Activated CD4-positive, alpha-beta T cell treated with anti-CD3 and anti-CD28 coated beads for 36 hours (primary cell): ENCODE measurements at regions of chr7 and their contacts with region 1.

Region 1: DNA sequence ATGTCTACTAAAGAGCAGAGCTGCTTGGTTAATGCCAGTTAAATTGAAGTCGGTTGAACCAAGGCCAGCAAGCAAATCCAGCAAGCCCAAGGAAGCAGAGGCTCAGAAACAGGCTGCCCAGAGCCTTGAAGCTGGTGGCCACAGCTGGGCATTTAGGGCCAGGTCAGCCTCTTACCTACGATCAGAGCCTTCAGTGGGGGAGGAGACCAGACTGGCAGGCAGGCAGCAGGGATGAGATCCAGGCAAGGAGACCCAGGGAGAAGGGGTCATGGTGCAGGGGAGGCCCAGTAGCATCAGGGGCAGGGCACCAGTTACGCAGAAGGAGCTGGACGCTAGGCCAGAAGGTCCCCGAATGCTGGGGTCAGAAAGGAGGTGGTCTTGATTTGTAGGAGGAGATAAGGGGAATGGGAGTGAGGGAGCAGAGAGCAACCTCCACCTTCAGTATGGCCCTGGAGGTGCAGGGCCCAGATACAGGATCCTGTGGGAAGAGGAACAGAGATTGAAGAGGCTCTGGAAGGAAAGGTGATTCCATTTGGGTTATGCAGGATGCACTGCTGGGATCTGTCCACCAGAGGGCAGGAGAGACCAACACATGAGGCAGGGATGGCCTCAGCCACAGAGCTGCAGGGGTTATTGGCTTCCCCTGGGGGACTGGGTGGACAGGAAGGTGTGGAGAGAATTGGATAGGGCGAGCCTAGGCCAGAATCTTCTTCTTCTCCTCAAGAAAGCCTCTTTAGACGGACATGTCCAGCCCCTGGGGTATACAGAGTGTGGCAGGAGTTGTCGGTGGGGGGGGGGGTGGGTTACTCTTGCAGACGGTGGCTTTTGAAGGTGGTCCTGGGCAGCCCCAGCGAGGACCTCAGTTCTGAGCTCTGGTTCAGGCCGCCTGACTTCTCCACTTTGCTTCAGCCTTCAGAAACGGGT is 132.6 kb upstream of the PODXL start:
- DNase-seq: peak; percentile 75
- ATAC-seq: peak; percentile 75
- H3K4me3 Mint-ChIP-seq: no peak overlapping the region
- H3K27ac Mint-ChIP-seq: no peak overlapping the region
- H3K4me1 Mint-ChIP-seq: no peaks in the 10 kb centered on the region
- H3K27me3 Mint-ChIP-seq: peaks cover 42% of the 10 kb centered on the region

Region 2: GRCh38 chr7:131699323-131699722 is 10.3 kb after region 1 on chr7:
- CTCF ChIA-PET with region 1: interaction called, 20 read pairs
- POLR2A ChIA-PET with region 1: no interaction called
- intact Hi-C with region 1: no loop called
- DNase-seq: no peak
- ATAC-seq: no peak
- H3K4me3 Mint-ChIP-seq: no peak overlapping the region
- H3K27ac Mint-ChIP-seq: no peak overlapping the region
- H3K4me1 Mint-ChIP-seq: no peaks in the 10 kb centered on the region
- H3K27me3 Mint-ChIP-seq: peaks cover 5% of the 10 kb centered on the region

Region 3: DNA sequence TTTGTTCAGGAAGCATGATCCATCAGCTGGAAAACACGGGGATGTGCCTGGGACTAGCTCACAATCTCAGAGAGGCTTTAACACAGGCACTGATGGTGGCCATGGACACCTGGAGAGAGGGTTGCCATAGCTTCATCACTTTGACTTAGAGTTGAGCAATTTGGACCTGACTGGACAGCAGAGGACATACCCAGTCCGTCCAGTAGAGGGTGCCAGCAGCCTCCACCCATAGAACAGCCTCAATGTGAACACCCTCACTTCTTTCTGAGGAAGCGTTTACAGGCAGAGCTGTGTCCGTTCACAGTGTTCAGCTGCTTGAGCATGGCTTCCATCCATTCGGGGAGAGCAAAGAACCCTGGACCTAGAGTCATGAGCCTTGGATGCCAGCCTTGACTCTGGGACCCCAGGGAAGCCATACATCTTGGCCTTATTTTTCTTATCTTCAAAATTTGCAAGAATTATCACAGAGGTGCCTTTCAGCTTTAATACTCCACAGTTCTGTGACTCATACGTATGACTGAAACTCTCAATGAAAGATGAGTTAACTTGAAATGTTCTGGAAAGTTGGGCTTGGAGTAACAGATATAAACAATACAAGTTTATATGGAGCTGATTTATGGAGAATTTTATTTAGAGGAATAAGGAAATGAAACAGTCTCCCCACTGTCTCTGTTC is 170.3 kb after region 1 on chr7:
- CTCF ChIA-PET with region 1: interaction called, 10 read pairs
- POLR2A ChIA-PET with region 1: no interaction called
- intact Hi-C with region 1: loop called in 1 of 2 experiments (anchors 5 kb)
- DNase-seq: peak; percentile 69
- ATAC-seq: peak; percentile 74
- H3K4me3 Mint-ChIP-seq: no peak overlapping the region
- H3K27ac Mint-ChIP-seq: no peak overlapping the region
- H3K4me1 Mint-ChIP-seq: no peaks in the 10 kb centered on the region
- H3K27me3 Mint-ChIP-seq: peaks cover 9% of the 10 kb centered on the region

Region 4: DNA sequence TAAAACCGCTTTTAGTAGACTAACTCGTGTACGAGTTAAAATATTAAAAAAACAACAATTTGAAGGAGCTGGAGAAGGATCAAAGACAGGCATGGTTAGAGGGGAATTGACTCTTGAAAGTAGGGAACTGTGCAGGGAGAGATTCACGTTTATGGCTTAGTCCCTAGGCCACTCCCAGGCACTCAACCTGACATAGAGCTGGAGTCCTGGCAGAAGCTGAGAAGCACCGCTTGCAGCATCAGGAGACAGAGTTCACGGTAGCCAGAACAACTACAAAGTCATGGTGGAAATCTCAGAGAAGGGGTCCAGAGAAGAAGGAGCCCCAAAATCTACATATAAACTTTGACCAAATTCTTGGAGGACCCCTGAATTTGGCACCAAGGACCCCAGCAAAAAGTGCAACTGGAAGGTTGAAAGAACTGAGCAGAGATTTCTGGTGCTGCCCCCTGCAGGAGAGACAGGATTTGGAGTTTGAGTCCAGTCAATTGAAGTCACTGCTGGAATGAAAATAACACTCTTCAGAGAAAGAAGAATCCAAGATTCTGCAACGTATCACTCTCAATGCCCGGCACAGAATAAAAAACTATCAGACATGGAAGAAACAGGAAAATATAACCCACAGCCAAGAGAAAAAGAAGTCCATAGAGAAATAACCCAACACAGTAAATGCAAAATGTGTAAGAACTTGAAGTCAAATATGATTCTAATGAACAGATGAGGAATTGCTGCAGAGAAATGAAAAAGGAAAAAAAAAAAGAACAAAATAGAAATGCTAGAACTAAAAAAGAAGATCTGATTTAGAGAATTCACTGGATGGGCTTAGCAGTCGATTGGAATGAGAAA is 360.7 kb after region 1 on chr7:
- CTCF ChIA-PET with region 1: interaction called, 5 read pairs
- POLR2A ChIA-PET with region 1: no interaction called
- intact Hi-C with region 1: loop called (anchors 1 to 5 kb)
- DNase-seq: peak; percentile 64
- ATAC-seq: no peak
- H3K4me3 Mint-ChIP-seq: no peak overlapping the region
- H3K27ac Mint-ChIP-seq: no peak overlapping the region
- H3K4me1 Mint-ChIP-seq: no peaks in the 10 kb centered on the region
- H3K27me3 Mint-ChIP-seq: peaks cover 13% of the 10 kb centered on the region

Region 5: GRCh38 chr7:132318352-132319318 is 629.6 kb after region 1 on chr7:
- CTCF ChIA-PET with region 1: no interaction called
- POLR2A ChIA-PET with region 1: no interaction called
- intact Hi-C with region 1: loop called in 1 of 2 experiments (anchors 5 kb)
- DNase-seq: peak; percentile 88
- ATAC-seq: peak; percentile 95
- H3K4me3 Mint-ChIP-seq: peak overlapping the region; percentile 17
- H3K27ac Mint-ChIP-seq: no peak overlapping the region
- H3K4me1 Mint-ChIP-seq: peaks cover 10% of the 10 kb centered on the region
- H3K27me3 Mint-ChIP-seq: peaks cover 35% of the 10 kb centered on the region

Region 6: GRCh38 chr7:132580717-132581285 is 891.8 kb after region 1 on chr7:
- CTCF ChIA-PET with region 1: interaction called, 4 read pairs
- POLR2A ChIA-PET with region 1: no interaction called
- intact Hi-C with region 1: loop called in 1 of 2 experiments (anchors 1 kb)
- DNase-seq: peak; percentile 84
- ATAC-seq: peak; percentile 87
- H3K4me3 Mint-ChIP-seq: no peak overlapping the region
- H3K27ac Mint-ChIP-seq: no peak overlapping the region
- H3K4me1 Mint-ChIP-seq: peaks cover 6% of the 10 kb centered on the region
- H3K27me3 Mint-ChIP-seq: peaks cover 26% of the 10 kb centered on the region